PC-3 (cell line): ENCODE measurements at regions of chr2 and their contacts with region 1.

Region 1: DNA sequence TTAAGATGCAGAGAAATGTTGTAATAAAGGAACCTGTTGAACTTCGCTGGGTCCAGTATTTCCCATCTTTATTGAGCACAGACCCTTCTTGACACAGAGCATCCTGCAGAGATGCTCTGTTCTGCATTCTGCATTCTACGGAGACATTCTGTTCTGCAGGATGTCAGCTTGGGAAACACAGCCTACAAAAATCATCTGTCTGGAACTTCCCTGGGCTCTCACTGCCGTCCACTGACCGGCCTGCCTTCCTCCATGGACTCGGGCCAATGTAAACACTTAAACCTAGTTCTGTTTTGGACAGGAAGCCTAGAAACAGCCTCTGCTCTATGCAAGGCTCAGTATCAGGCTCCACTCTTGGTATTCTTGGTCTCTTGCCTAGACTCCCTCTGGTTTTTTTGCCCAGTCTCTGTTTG is 90.0 kb upstream of the PPP1CB start:
- DNase-seq: peak; percentile 84
- ATAC-seq: peak; percentile 44
- H3K4me3 ChIP-seq: peak overlapping the region; percentile 23; the same call in 1 of the 2 replicates
- H3K27ac ChIP-seq: peak overlapping the region; percentile 88
- H3K4me1 ChIP-seq: peaks cover 52% of the 10 kb centered on the region
- H3K27me3 ChIP-seq: no peaks in the 10 kb centered on the region
- CTCF ChIP-seq: no peak

Region 2: GRCh38 chr2:28594289-28595108 is 67.1 kb before region 1 on chr2:
- CTCF ChIA-PET with region 1: interaction called, 13 read pairs
- POLR2A ChIA-PET with region 1: no interaction called
- intact Hi-C with region 1: loop called (anchors 1 kb)
- DNase-seq: peak; percentile 99
- ATAC-seq: peak; percentile 96
- H3K4me3 ChIP-seq: no peak overlapping the region
- H3K27ac ChIP-seq: peak overlapping the region; percentile 81
- H3K4me1 ChIP-seq: peaks cover 30% of the 10 kb centered on the region
- H3K27me3 ChIP-seq: no peaks in the 10 kb centered on the region
- CTCF ChIP-seq: peak; percentile 91

Region 3: DNA sequence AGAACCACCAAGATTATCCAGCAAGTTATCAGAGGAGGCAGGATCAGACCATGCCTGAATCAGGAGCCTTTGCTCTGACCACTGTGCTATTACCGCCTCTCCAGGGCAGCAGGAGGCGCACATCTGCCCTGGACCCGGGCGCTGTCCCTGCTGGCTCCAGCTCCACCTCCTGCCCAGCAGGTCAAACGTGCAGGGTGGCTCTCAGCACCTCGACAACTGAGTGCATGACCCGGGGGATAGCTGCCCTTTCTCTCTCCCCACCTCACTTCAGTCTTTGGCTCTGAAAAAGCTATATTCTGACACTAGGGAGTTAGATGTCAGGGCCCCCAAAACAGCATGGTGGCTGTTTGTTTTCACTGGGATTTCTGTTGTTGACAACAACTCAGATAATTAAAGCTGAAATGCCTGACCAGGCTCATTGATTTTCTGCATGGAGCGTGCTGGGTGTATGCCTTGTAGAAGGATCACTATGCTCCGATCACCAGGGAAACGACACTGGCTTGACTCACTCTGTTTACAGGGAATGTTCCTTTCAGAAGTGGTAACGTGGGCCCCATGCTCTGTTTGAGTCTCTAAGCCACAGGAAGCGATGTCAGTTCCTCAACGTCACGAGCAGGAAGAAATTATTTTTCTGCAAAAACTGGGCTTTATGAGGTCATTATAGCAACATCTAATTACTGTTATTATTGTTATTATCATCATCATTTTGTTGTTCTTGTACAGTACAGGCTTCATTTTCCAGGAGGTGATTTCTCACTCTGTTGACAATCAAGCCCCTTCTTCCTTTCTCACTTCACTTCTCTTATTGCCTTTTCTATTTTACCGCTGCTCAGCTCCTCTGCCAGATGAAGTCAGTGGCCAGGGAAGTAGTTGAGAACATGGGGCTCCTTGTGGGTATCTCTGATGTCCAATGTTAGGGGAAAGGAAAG is 40.2 kb before region 1 on chr2:
- CTCF ChIA-PET with region 1: no interaction called
- POLR2A ChIA-PET with region 1: interaction called, 7 read pairs
- intact Hi-C with region 1: loop called (anchors 1 kb)
- DNase-seq: peak; percentile 92
- ATAC-seq: peak; percentile 98
- H3K4me3 ChIP-seq: peak overlapping the region; percentile 11; the same call in 1 of the 2 replicates
- H3K27ac ChIP-seq: peak overlapping the region; percentile 87
- H3K4me1 ChIP-seq: peaks cover 51% of the 10 kb centered on the region
- H3K27me3 ChIP-seq: no peaks in the 10 kb centered on the region
- CTCF ChIP-seq: peak; percentile 80

Region 4: DNA sequence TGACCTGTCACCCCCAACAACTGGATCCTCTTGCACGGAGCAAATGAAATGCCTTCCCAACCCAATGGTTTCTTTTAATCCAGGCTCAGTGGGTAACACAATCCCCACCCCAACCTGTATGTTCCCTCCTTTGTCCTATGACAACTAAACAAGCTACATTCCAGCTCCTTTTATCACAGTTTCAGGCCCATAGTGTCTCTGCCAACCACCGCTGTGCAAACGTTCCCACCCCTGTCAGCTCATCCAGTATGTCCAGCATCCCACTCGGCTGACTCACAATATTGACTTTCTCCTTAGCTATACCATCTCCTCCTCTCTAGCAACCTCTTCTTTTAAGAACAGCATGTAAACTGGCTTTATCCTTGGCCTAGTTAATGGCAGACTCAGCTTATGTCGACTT is 27.8 kb before region 1 on chr2:
- CTCF ChIA-PET with region 1: interaction called, 3 read pairs
- POLR2A ChIA-PET with region 1: interaction called, 6 read pairs
- intact Hi-C with region 1: loop called (anchors 2 kb)
- DNase-seq: peak; percentile 98
- ATAC-seq: peak; percentile 99
- H3K4me3 ChIP-seq: 0 out of 2 replicates have a peak overlapping the region, but pooled peaks have one; percentile 25
- H3K27ac ChIP-seq: peak overlapping the region; percentile 94
- H3K4me1 ChIP-seq: peaks cover 26% of the 10 kb centered on the region
- H3K27me3 ChIP-seq: no peaks in the 10 kb centered on the region
- CTCF ChIP-seq: no peak

Region 5: DNA sequence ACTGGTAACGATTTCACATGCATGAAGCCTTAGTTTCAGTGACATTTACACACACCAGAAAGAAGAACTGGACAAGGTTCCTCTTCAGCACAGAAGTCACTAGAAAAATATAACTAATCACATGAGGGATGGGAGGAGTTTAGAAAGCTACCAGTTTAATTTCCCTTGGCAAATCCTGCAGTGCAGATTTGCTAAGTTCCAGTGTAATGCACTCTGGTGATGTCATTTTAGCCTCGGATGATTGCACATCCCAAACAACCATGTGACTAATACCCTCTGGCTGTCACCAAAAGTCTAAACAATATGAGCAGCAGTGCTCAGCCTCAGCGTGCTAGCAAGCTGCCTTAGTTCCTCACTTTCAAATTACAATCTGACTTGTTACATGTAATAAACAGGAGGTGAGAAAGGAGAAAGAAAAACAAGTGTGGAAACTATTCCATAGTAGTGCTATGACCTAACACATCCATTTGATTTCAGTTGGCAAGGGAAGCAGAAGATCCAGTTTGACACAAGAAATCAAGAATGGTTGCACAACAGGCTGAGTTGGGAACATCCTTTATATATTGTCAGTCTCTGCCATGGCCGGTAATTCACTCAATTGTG is 54.8 kb after region 1 on chr2:
- CTCF ChIA-PET with region 1: no interaction called
- POLR2A ChIA-PET with region 1: no interaction called
- intact Hi-C with region 1: loop called (anchors 2 kb)
- DNase-seq: peak; percentile 93
- ATAC-seq: peak; percentile 91
- H3K4me3 ChIP-seq: peak overlapping the region; percentile 10; the same call in 1 of the 2 replicates
- H3K27ac ChIP-seq: peak overlapping the region; percentile 80
- H3K4me1 ChIP-seq: peaks cover 48% of the 10 kb centered on the region
- H3K27me3 ChIP-seq: no peaks in the 10 kb centered on the region
- CTCF ChIP-seq: no peak

Region 6: DNA sequence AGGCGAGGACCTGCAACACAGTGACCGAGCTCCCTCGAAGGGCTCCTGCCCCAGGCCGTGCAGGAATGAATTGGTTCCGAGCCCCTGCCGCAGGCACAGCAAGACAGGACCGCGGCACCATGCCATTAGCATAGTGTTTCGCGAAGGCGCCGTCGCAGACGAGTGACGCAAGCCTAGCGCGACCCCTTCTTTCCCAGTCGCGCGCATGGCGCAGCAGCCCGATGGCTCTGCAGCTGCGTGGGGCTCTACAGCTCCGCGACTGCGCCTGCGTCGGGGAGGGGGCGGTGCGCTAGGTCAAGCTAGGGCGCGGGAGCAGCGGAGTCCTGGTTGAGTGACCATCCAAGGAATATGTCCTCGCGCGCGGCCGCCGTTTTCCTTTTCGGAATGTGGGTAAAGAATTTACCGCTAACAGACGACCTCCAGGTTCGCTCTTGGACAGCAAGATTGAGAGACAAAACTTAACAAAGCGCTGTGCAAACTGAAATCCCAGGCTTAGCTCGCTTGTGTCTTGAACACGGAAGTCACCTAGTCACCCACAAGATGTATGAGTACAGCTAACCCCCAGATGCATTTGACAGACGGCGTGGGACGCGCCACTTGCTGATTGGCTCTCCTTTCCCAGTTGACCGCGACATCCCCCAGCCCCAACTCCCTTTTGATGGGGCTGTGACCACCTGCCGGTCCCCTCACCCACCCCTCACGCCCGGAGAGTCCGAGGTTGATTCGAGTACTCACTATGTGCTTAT is 208.7 kb after region 1 on chr2 and contains the start of gene TRMT61B:
- CTCF ChIA-PET with region 1: no interaction called
- POLR2A ChIA-PET with region 1: no interaction called
- intact Hi-C with region 1: no loop called
- DNase-seq: peak; percentile 96
- ATAC-seq: peak; percentile 99
- H3K4me3 ChIP-seq: peak within 1 kb of the TSS; percentile 87
- H3K27ac ChIP-seq: peak within 1 kb of the TSS; percentile 14
- H3K4me1 ChIP-seq: peaks cover 16% of the 10 kb centered on the region
- H3K27me3 ChIP-seq: peaks cover 2% of the 10 kb centered on the region; the same call in 1 of the 2 replicates
- CTCF ChIP-seq: no peak
- total RNA-seq, gene TRMT61B: 19.8 and 21.7 TPM in 2 replicates